Head of caudate nucleus (tissue), 42 donors: ENCODE measurements at regions of chr19 and their contacts with region 1.

Region 1: GRCh38 chr19:6632002-6632621 is 37.8 kb downstream of the TNFSF14 start:
- DNase-seq: peak in 40 of 42 donors; percentile 8 to 96 (median 76)

Region 2: DNA sequence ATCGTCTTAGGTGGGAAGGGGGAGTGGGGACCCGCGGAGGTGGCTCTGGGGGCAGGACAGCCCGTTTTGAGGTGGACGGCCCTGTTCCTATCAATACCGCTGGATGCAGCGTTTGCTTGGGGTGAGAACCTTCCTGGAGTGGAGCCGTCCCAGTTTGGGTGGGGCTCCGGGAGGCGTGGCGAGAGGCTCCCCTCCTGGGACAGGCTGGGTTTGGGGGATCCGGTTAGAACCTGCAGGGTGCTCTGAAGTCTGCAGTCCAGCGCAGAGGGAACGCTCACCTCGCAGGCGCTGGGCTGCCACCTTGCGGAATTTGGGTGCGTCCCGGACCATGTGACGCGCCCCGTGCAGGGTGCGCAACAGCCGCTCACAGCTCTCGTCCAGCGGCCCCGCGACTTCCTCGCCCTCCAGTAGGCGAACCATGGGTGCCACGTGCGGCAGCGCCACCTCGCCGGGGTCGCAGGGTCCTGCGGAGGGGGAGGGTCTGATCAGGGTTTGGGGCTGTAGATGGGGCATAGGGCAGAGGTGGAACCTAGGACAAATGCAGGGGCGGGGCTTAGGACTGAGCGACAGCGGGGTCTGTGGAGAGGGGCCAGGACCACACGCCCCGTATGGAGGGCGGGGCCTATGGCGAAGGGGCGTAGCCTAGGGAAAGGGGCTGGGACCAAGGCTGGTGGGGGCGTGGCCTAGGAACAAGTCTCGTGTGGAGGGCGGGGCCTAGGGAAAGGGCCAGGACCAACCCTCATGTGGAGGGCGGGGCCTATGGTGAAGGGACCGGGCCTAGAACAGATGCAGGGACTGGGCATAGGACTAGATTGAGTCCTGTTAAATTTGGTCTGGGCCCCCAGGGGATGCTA is 121.3 kb after region 1 on chr19:
- intact Hi-C with region 1: loop called (anchors 10 kb)
- DNase-seq: peak in 22 of 42 donors; percentile 11 to 68 (median 44)